ENCODE measurements at regions of chr1 and their contacts with region 1.

Region 1: GRCh38 chr1:38727684-38728584 is 131.6 kb downstream of the RRAGC start:
- DNase-seq: peak; percentile 100
- H3K4me3 ChIP-seq: peak overlapping the region; percentile 14
- H3K27ac ChIP-seq: peak overlapping the region; percentile 96
- H3K4me1 ChIP-seq: peaks cover 63% of the 10 kb centered on the region
- H3K27me3 ChIP-seq: no peaks in the 10 kb centered on the region
- CTCF ChIP-seq: no peak

Region 2: GRCh38 chr1:38046884-38047602 is 680.9 kb before region 1 on chr1:
- CTCF ChIA-PET with region 1: no interaction called
- POLR2A ChIA-PET with region 1: no interaction called
- intact Hi-C with region 1: loop called (anchors 5 kb)
- DNase-seq: peak; percentile 98
- H3K4me3 ChIP-seq: peak overlapping the region; percentile 97
- H3K27ac ChIP-seq: peak overlapping the region; percentile 88
- H3K4me1 ChIP-seq: peaks cover 37% of the 10 kb centered on the region
- H3K27me3 ChIP-seq: no peaks in the 10 kb centered on the region
- CTCF ChIP-seq: 0 out of 2 replicates have a peak, but pooled peaks have one; percentile 20

Region 3: DNA sequence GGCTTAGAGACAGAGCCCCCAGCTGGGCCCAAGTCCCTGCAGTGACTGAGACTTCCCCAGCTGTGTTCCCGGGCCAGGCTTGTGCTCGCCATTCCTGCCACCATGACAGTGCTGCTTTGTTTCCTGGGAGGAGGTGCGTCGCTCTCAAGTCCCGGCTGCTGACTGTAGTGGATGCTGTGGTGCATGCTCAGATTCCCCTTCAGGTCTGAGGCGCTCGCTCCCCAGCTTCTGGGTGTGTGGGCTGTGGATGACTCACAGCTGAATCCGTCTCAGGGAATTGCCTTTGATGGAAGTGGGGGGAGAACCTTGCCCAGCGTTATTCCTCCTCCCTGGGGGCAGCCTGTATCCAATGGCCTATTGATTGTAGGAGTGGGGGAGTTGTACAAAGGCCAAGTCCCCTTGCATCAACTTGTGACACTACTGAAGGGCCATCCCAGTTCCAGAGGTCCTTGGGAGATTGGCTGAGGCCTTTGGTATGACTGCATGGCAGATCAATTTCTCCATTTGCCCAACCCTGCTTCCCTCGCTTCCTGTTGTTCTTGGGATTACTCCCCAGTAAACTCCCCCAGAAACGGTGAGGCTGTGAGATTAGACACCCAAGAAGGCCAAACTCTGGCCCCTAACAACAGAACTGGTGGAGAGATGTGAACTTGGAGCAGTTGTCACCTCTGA is 663.6 kb before region 1 on chr1:
- CTCF ChIA-PET with region 1: no interaction called
- POLR2A ChIA-PET with region 1: no interaction called
- intact Hi-C with region 1: loop called (anchors 2 kb)
- DNase-seq: peak; percentile 94
- H3K4me3 ChIP-seq: no peak overlapping the region
- H3K27ac ChIP-seq: peak overlapping the region; percentile 96
- H3K4me1 ChIP-seq: peaks cover 96% of the 10 kb centered on the region
- H3K27me3 ChIP-seq: no peaks in the 10 kb centered on the region
- CTCF ChIP-seq: 0 out of 2 replicates have a peak, but pooled peaks have one; percentile 25

Region 4: GRCh38 chr1:38586993-38587646 is 140.8 kb before region 1 on chr1:
- CTCF ChIA-PET with region 1: no interaction called
- POLR2A ChIA-PET with region 1: no interaction called
- intact Hi-C with region 1: loop called (anchors 5 kb)
- DNase-seq: peak; percentile 84
- H3K4me3 ChIP-seq: no peak overlapping the region
- H3K27ac ChIP-seq: peak overlapping the region; percentile 45
- H3K4me1 ChIP-seq: peaks cover 64% of the 10 kb centered on the region
- H3K27me3 ChIP-seq: no peaks in the 10 kb centered on the region
- CTCF ChIP-seq: peak; percentile 99

Region 5: DNA sequence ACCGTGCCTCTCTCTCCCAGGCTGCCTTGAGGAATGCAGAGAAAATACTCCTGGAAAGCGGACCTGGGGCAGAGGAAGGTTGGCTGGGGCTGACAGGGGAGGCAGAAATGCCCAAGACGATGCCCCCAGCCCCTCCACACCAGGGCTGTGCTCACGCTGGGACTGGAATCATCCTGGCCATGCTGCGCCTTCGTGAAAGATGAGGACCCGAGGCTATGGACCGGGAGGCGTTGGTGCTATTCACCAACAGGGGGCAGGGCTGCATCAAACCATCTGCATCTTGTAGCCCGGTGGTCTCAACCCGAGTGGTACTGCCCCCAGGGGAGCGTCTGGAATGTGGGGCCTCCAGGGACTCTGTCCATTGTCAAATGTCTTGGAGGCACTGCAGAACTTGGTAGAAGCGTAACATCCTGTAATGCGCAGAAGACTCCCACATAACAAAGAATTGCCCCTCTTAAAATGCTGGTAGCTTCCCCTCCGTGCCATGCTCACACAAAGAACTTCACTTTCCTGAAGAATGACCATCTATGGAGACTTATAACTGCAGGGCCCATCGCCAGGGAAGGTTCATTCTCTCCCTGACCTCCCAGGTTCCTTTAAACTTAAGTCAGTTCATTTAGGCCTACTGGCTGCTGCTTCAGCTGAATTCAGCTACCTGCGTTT is 119.6 kb before region 1 on chr1:
- CTCF ChIA-PET with region 1: no interaction called
- POLR2A ChIA-PET with region 1: no interaction called
- intact Hi-C with region 1: loop called (anchors 5 kb)
- DNase-seq: peak; percentile 91
- H3K4me3 ChIP-seq: no peak overlapping the region
- H3K27ac ChIP-seq: no peak overlapping the region
- H3K4me1 ChIP-seq: peaks cover 17% of the 10 kb centered on the region
- H3K27me3 ChIP-seq: no peaks in the 10 kb centered on the region
- CTCF ChIP-seq: peak; percentile 92

Region 6: GRCh38 chr1:38818175-38818976 is 90.4 kb after region 1 on chr1:
- CTCF ChIA-PET with region 1: no interaction called
- POLR2A ChIA-PET with region 1: no interaction called
- intact Hi-C with region 1: loop called (anchors 5 kb)
- DNase-seq: peak; percentile 75
- H3K4me3 ChIP-seq: peak overlapping the region; percentile 60
- H3K27ac ChIP-seq: peak overlapping the region; percentile 63
- H3K4me1 ChIP-seq: peaks cover 6% of the 10 kb centered on the region
- H3K27me3 ChIP-seq: no peaks in the 10 kb centered on the region
- CTCF ChIP-seq: no peak; the same call in none of the 2 replicates

Measured in A673 (cell line).